Activated CD4-positive, alpha-beta T cell treated with anti-CD3 and anti-CD28 coated beads, Interleukin-2, amount 10 ng/mL, durations not matched to agents 7 days and 5 days (primary cell): ENCODE measurements at regions of chr11 and their contacts with region 1.

Region 1: DNA sequence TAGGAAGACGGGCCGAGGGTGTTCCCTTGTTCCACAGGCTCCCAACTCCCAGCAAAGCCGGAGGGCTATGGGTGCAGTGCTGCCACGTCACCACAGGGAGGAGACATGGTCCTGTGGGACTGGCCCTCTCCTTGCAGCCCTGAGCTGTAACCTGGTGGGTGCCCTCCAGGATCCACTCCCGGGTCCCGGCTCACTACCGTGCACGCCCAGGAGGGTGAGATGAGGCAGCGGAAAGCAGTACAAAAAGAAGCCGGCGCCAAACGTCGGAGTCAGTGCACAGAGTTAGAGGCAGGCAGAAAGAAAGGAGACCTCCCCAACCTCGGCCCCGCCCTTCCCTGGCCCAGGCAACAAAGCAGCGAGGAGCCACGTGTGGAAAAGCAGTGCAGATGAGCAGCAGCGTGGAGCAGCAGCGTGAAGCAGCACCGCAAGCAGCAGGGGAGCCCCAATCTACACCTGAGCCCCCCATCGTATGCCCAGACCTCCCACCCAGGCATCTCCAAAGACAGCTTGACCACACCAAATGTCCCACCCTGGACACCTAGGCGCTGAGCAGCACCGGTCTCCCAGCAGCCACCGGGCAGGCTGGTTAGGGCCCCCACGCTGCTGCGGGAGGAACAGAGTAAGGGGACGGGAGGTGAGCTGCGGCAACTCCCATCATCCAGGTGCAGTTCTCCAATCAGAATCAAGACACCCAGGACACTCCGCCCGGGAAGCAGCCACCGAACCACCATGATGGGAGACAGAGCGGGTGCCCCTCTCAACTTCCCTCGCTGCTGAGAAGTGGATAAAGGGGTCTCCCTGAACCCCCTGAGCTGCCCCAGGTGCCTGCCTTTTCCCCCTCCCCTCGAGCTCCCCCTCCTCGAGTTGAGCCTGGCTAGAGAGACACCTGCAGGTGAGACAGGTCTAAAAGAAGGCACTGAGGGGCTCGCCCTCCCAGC is 28.8 kb downstream of the IGSF9B start:
- DNase-seq: peak; percentile 79
- H3K4me3 Mint-ChIP-seq: peak overlapping the region; percentile 70
- H3K27ac Mint-ChIP-seq: peak overlapping the region; percentile 90
- H3K4me1 Mint-ChIP-seq: peaks cover 43% of the 10 kb centered on the region
- H3K27me3 Mint-ChIP-seq: no peaks in the 10 kb centered on the region

Region 2: GRCh38 chr11:133913761-133914160 is 14.2 kb before region 1 on chr11:
- CTCF ChIA-PET with region 1: interaction called, 10 read pairs
- POLR2A ChIA-PET with region 1: no interaction called
- DNase-seq: no peak
- H3K4me3 Mint-ChIP-seq: no peak overlapping the region
- H3K27ac Mint-ChIP-seq: peak overlapping the region; percentile 41
- H3K4me1 Mint-ChIP-seq: peaks cover 4% of the 10 kb centered on the region
- H3K27me3 Mint-ChIP-seq: no peaks in the 10 kb centered on the region

Region 3: GRCh38 chr11:133947321-133947756 is 19.4 kb after region 1 on chr11:
- CTCF ChIA-PET with region 1: interaction called, 36 read pairs
- POLR2A ChIA-PET with region 1: no interaction called
- DNase-seq: peak; percentile 79
- H3K4me3 Mint-ChIP-seq: peak overlapping the region; percentile 88
- H3K27ac Mint-ChIP-seq: peak overlapping the region; percentile 96
- H3K4me1 Mint-ChIP-seq: peaks cover 93% of the 10 kb centered on the region
- H3K27me3 Mint-ChIP-seq: no peaks in the 10 kb centered on the region

Region 4: DNA sequence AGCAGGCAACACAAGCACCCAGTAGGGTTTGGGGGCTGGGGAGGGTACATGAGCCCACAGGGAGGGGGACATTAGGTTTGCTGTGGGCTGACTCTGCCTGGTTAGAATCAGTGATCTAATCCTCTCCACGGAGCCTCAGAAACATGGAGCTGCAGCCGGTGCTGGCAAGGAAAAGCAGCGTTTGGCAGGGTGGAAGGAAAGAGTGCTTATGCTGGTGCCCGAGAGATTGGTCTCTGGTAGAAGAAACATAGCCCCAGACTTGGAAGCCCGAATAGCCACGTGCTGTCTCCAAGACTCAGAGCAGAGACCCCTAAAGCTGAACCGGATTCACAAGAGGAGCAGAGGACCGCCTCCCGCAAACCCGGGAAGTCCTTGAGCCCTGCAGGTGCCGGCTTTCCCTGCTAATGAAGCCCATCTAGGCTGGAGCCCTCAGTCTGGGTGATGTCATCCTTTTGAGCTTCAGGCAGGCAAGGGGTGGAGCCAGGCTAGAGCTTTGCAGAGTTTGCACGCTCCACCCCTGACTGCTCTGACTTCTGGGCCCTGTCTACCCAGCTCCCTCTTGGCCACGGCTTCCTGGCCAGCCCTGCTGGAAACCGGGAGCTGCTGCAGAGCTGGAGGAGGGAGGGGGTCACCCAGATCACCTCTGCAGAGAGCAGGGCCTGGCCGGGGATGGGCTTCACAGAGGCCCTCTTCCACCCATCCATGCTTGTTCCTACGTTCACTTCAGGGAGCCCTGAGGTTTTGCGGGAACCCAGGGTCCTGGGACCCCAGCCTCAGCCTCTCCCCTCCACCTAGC is 105.9 kb after region 1 on chr11:
- CTCF ChIA-PET with region 1: interaction called, 13 read pairs
- POLR2A ChIA-PET with region 1: no interaction called
- DNase-seq: peak; percentile 81
- H3K4me3 Mint-ChIP-seq: peak overlapping the region; percentile 42
- H3K27ac Mint-ChIP-seq: peak overlapping the region; percentile 84
- H3K4me1 Mint-ChIP-seq: peaks cover 68% of the 10 kb centered on the region
- H3K27me3 Mint-ChIP-seq: peaks cover 14% of the 10 kb centered on the region